Heart left ventricle (tissue), 16 donors: ENCODE measurements at regions of chr6 and their contacts with region 1.

Region 1: GRCh38 chr6:36623547-36624459 is 29.6 kb downstream of the SRSF3 start:
- DNase-seq: peak; percentile 85 to 90 (median 87)
- ATAC-seq: peak; percentile 52 to 79 (median 62)
- H3K4me3 ChIP-seq: no peak overlapping the region
- H3K27ac ChIP-seq: peak overlapping the region in 2 of 12 donors; percentile 43 to 67
- H3K4me1 ChIP-seq: peaks cover 0 to 67% (median 27%) of the 10 kb centered on the region in 12 donors
- H3K27me3 ChIP-seq: no peaks in the 10 kb centered on the region
- CTCF ChIP-seq: peak; percentile 71 to 93 (median 86)
- POLR2A ChIP-seq: no peak

Region 2: GRCh38 chr6:36131511-36132245 is 492.1 kb before region 1 on chr6:
- intact Hi-C with region 1: no loop called
- DNase-seq: no peak
- ATAC-seq: peak in 3 of 4 donors; percentile 12 to 28 (median 26)
- H3K4me3 ChIP-seq: peak overlapping the region in 7 of 12 donors; percentile 30 to 64 (median 47)
- H3K27ac ChIP-seq: peak overlapping the region in 1 of 12 donors; percentile 84
- H3K4me1 ChIP-seq: peaks cover 0 to 49% (median 14%) of the 10 kb centered on the region in 12 donors
- H3K27me3 ChIP-seq: peaks cover 0 to 30% (median 5%) of the 10 kb centered on the region in 9 donors
- CTCF ChIP-seq: no peak
- POLR2A ChIP-seq: no peak

Region 3: DNA sequence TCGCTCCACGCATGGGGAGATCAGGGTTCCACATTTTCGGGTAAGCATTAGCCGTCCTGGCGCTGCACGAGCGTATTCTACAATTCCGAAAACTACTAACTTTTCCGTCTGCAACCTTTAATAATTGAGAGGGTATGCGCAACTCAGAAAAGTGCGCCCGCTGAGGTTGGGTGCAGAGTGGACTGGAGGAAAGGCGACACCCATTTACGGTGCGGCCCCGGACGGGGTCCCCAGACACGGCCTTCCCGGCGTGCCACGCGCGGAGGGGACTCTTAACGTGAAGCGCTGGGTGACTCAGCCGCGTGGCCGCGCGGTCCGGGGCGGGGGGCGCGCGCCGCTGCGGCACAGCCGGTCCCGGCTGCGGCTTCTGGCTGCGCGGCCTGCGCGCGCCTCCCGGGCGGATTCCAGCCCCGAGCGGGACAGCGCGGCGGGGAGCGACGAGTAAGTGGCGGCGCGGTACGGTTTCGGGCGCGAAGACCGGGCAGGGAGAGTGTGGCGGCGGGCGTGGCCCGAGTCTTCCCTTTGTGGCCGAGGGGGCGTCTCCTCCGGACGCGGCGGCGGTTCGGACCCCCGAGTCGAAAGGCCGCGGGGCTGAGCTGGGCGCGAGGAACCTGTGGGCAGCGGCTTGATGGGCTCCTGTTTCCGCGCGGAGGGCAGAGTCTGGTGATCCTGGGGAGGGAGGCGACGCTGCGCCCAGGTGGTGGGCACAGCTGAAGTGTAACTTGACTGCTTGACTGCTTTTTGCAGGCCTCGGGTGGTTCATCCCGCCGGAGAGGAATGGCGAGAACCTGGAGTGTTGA is 180.9 kb before region 1 on chr6 and contains the starts of genes KCTD20 and PXT1:
- intact Hi-C with region 1: no loop called
- DNase-seq: peak; percentile 90 to 95 (median 93)
- ATAC-seq: peak; percentile 87 to 94 (median 91)
- H3K4me3 ChIP-seq: peak within 1 kb of the TSS; percentile 78 to 99 (median 89)
- H3K27ac ChIP-seq: peak within 1 kb of the TSS; percentile 85 to 100 (median 98)
- H3K4me1 ChIP-seq: peaks cover 8 to 48% (median 34%) of the 10 kb centered on the region in 12 donors
- H3K27me3 ChIP-seq: no peaks in the 10 kb centered on the region
- CTCF ChIP-seq: no peak
- POLR2A ChIP-seq: peak in 1 of 2 donors; percentile 70
- total RNA-seq, gene KCTD20: 25.0 to 43.9 (median 29.0) TPM
- total RNA-seq, gene PXT1: 0.21 to 0.59 (median 0.40) TPM in 4 of 9 donors, not detected in the others

Region 4: DNA sequence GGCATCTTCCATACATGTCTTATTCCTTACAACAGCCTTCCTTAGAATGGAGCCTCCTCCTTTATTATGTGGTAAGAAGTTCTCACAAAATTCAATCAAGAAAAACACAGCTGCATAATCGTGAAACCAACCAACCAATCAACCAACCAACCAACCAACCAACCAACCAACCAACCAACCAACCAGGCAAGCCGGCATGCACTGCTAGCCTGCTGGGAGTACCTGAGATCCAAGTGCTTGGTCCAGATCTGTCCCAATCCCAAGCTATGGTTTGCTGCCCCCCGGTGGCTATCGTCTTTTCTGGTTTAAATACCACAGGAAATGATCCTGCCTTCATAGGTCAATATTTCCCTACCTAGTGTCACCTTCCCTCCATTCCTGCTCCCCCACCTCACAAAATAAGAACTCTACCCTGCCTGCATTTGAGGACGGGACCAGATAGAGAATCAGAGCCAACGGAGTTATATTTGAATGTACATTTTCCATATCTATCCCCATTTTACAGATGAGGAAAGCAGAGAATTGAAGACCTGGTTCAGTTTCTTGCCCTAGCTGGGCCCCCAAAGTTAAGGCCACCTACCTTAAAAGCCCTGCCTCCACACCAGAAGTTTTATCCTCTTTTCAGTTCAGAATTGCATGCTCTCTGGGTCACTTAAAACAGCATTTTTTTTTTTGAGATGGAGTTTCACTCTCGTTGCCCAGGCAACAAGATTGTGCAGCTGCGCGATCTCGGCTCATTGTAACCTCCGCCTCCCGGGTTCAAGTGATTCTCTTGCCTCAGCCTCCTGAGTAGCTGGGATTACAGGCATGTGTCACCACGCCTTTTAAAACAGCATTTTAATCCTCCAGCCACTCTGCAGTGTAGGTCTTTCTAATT is 100.9 kb after region 1 on chr6:
- intact Hi-C with region 1: loop called in 3 of 10 experiments (anchors 1 to 10 kb)
- DNase-seq: peak in 3 of 5 donors; percentile 42 to 68 (median 63)
- ATAC-seq: peak in 3 of 4 donors; percentile 49 to 75 (median 55)
- H3K4me3 ChIP-seq: no peak overlapping the region
- H3K27ac ChIP-seq: no peak overlapping the region
- H3K4me1 ChIP-seq: peaks cover 0 to 25% (median 5%) of the 10 kb centered on the region in 12 donors
- H3K27me3 ChIP-seq: no peaks in the 10 kb centered on the region
- CTCF ChIP-seq: peak; percentile 36 to 60 (median 49)
- POLR2A ChIP-seq: no peak

Region 5: GRCh38 chr6:36759148-36759759 is 135.5 kb after region 1 on chr6:
- intact Hi-C with region 1: loop called in 7 of 10 experiments (anchors 1 to 5 kb)
- DNase-seq: peak; percentile 78 to 92 (median 82)
- ATAC-seq: peak; percentile 62 to 83 (median 80)
- H3K4me3 ChIP-seq: no peak overlapping the region
- H3K27ac ChIP-seq: no peak overlapping the region
- H3K4me1 ChIP-seq: peaks cover 0 to 45% (median 5%) of the 10 kb centered on the region in 12 donors
- H3K27me3 ChIP-seq: no peaks in the 10 kb centered on the region
- CTCF ChIP-seq: peak; percentile 94 to 99 (median 97)
- POLR2A ChIP-seq: no peak

Region 6: DNA sequence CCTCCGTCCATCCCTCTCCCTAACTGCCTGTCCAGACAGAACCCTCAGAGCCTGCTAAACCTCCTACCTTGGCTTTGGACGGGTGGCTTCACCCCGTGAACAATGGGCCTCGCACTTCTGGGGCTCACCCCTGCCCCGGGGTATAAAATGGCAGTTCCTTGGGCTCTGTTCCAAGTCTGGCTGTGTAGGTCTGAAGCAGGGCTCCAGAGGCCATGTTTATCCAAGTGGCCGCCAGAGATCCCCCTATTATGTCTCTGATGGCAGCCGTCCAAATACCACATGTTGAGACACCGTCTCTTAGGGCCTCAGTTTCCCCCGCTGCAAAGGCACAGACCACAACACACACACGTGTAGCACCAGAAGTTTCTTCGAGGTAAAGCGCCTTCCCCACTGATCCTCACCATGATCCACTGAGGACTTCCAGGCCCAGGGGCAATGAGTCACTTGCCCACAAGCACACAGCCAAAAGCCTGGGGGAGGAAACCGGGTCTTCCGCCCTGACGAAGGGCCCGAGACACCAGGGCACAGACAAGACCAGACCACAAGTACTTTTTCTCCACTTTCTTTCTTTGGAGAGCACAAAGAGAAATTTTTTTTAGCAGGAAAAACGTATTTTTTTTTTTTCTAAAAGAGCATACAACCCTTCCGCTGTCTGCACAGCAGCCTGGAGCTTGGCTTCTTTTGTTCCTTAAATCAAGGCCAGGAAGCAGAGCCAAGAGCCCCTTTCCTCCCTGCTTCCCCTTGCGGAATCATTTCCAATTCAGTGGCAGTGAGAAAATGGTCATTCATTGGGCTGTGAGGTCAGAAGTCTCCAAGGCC is 203.7 kb after region 1 on chr6:
- intact Hi-C with region 1: loop called in 1 of 10 experiments (anchors 10 kb)
- DNase-seq: peak; percentile 54 to 80 (median 75)
- ATAC-seq: peak; percentile 2 to 69 (median 22)
- H3K4me3 ChIP-seq: peak overlapping the region in 1 of 12 donors; percentile 12
- H3K27ac ChIP-seq: peak overlapping the region; percentile 26 to 94 (median 70)
- H3K4me1 ChIP-seq: peaks cover 0 to 95% (median 56%) of the 10 kb centered on the region in 12 donors
- H3K27me3 ChIP-seq: no peaks in the 10 kb centered on the region
- CTCF ChIP-seq: no peak
- POLR2A ChIP-seq: no peak

Region 7: GRCh38 chr6:36851149-36851614 is 227.4 kb after region 1 on chr6:
- intact Hi-C with region 1: loop called in 6 of 10 experiments (anchors 10 kb)
- DNase-seq: peak in 3 of 5 donors; percentile 36 to 69 (median 68)
- ATAC-seq: peak in 2 of 4 donors; percentile 4 to 17
- H3K4me3 ChIP-seq: no peak overlapping the region
- H3K27ac ChIP-seq: peak overlapping the region in 8 of 12 donors; percentile 39 to 98 (median 79)
- H3K4me1 ChIP-seq: peaks cover 2 to 76% (median 50%) of the 10 kb centered on the region in 12 donors
- H3K27me3 ChIP-seq: no peaks in the 10 kb centered on the region
- CTCF ChIP-seq: peak; percentile 68 to 90 (median 83)
- POLR2A ChIP-seq: no peak

Region 8: DNA sequence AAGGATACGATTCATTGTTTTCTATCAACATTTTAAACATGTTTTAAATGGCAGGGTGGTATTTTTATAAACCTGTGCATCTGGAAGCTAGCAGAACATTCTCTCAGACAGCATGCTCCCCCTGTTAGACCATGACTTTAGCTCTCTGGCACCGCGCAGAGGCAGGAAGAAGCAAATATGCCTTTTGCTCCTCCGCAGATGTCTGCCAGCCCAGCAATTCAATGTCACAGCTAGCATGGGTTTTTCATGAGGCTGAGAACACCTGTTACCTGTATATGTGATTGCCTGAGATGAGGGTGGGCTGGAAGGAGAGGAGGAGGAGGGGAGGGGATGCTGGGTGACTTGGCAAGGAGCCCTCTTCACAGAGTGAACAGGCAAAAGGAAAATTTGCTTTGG is 355.5 kb after region 1 on chr6:
- intact Hi-C with region 1: loop called in 1 of 10 experiments (anchors 10 kb)
- DNase-seq: peak in 4 of 5 donors; percentile 64 to 78 (median 66)
- ATAC-seq: peak; percentile 54 to 72 (median 60)
- H3K4me3 ChIP-seq: no peak overlapping the region
- H3K27ac ChIP-seq: peak overlapping the region in 11 of 12 donors; percentile 22 to 77 (median 51)
- H3K4me1 ChIP-seq: peaks cover 12 to 96% (median 77%) of the 10 kb centered on the region in 12 donors
- H3K27me3 ChIP-seq: no peaks in the 10 kb centered on the region
- CTCF ChIP-seq: peak; percentile 19 to 74 (median 58)
- POLR2A ChIP-seq: no peak